HepG2 (cell line): ENCODE measurements at regions of chr16 and their contacts with region 1.

Region 1: GRCh38 chr16:78503602-78504001 is 404.1 kb downstream of the WWOX start:
- DNase-seq: peak; percentile 61
- ATAC-seq: no peak
- H3K4me3 ChIP-seq: no peak overlapping the region
- H3K27ac ChIP-seq: no peak overlapping the region
- H3K4me1 ChIP-seq: peaks cover 67% of the 10 kb centered on the region
- H3K27me3 ChIP-seq: no peaks in the 10 kb centered on the region
- CTCF ChIP-seq: peak; percentile 71
- EP300 ChIP-seq: no peak
- POLR2A ChIP-seq: no peak
- RAD21 ChIP-seq: peak; percentile 70

Region 2: DNA sequence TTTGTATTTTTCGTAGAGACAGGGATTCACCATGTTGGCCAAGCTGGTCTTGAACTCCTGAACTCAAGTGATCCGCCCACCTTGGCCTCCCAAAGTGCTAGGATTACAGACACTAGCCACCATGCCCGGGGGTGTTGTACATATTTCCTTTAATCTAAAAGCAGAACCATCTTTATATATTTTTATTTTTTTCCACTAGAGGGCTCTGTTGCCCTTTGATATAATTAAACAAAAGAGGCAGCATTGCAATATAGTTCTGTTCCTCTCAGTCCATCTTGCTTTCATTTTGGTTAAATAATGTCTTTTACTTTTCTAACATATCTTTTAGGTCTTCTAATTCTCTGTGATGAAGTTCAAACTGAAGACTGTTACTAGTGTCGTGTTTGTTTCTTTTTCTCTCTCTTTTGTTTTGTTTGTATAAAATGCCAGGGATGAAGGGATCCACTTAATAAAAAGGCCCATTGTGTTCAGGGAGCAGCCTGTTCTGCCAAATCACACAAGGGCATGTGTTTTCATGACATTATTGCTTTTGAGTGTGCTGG is 380.8 kb before region 1 on chr16:
- CTCF ChIA-PET with region 1: no interaction called
- POLR2A ChIA-PET with region 1: no interaction called
- in situ Hi-C with region 1: no loop called
- intact Hi-C with region 1: loop called (anchors 5 kb)
- DNase-seq: peak; percentile 75
- ATAC-seq: peak; percentile 86
- H3K4me3 ChIP-seq: peak overlapping the region in 1 of 3 experiments; percentile 25; a peak in 2 of 6 replicates
- H3K27ac ChIP-seq: peak overlapping the region; percentile 33
- H3K4me1 ChIP-seq: peaks cover 37% of the 10 kb centered on the region
- H3K27me3 ChIP-seq: no peaks in the 10 kb centered on the region
- CTCF ChIP-seq: peak; percentile 61
- EP300 ChIP-seq: no peak
- POLR2A ChIP-seq: no peak
- RAD21 ChIP-seq: peak; percentile 70

Region 3: GRCh38 chr16:78461496-78462191 is 42.0 kb before region 1 on chr16:
- CTCF ChIA-PET with region 1: no interaction called
- POLR2A ChIA-PET with region 1: interaction called, 14 read pairs
- in situ Hi-C with region 1: no loop called
- intact Hi-C with region 1: loop called (anchors 1 kb)
- DNase-seq: peak; percentile 59
- ATAC-seq: peak; percentile 55
- H3K4me3 ChIP-seq: no peak overlapping the region; a peak in 1 of 6 replicates
- H3K27ac ChIP-seq: peak overlapping the region; percentile 1
- H3K4me1 ChIP-seq: peaks cover 45% of the 10 kb centered on the region
- H3K27me3 ChIP-seq: no peaks in the 10 kb centered on the region
- CTCF ChIP-seq: no peak
- EP300 ChIP-seq: no peak
- POLR2A ChIP-seq: no peak
- RAD21 ChIP-seq: no peak

Region 4: DNA sequence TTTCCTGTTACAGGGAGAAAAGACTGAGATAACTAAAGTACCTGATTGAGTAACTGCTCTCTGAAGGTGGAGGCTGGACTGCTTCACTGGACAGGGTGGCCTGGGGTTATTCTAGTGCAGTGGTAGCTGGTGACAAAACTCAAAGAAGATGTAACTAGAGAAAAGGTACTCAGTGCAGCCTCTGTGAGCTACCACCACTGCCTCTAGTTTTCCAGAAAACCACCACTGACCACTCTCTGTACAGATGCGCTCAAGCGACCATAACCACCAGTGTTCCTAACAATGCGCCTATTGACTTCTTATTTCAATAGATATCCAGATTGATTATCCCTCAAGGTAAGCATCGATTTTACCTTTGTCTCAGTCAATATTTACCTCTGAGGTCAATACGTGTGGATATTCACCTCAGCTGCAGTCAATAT is 88.1 kb after region 1 on chr16:
- CTCF ChIA-PET with region 1: no interaction called
- POLR2A ChIA-PET with region 1: no interaction called
- in situ Hi-C with region 1: no loop called
- intact Hi-C with region 1: loop called (anchors 5 kb)
- DNase-seq: no peak
- ATAC-seq: peak; percentile 67
- H3K4me3 ChIP-seq: no peak overlapping the region
- H3K27ac ChIP-seq: no peak overlapping the region
- H3K4me1 ChIP-seq: peaks cover 62% of the 10 kb centered on the region
- H3K27me3 ChIP-seq: no peaks in the 10 kb centered on the region
- CTCF ChIP-seq: no peak
- EP300 ChIP-seq: 0 out of 4 replicates have a peak, but pooled peaks of 1 of the 2 experiments have one; percentile 9
- POLR2A ChIP-seq: no peak
- RAD21 ChIP-seq: no peak

Region 5: GRCh38 chr16:79047229-79047983 is 543.8 kb after region 1 on chr16:
- CTCF ChIA-PET with region 1: no interaction called
- POLR2A ChIA-PET with region 1: interaction called, 3 read pairs
- in situ Hi-C with region 1: no loop called
- intact Hi-C with region 1: loop called (anchors 10 kb)
- DNase-seq: peak; percentile 29
- ATAC-seq: peak; percentile 80
- H3K4me3 ChIP-seq: no peak overlapping the region
- H3K27ac ChIP-seq: no peak overlapping the region
- H3K4me1 ChIP-seq: no peaks in the 10 kb centered on the region
- H3K27me3 ChIP-seq: no peaks in the 10 kb centered on the region
- CTCF ChIP-seq: peak; percentile 60
- EP300 ChIP-seq: no peak
- POLR2A ChIP-seq: no peak
- RAD21 ChIP-seq: peak; percentile 35; the same call in 1 of the 2 replicates